ENCODE measurements at regions of chr10 and their contacts with region 1.

Region 1: DNA sequence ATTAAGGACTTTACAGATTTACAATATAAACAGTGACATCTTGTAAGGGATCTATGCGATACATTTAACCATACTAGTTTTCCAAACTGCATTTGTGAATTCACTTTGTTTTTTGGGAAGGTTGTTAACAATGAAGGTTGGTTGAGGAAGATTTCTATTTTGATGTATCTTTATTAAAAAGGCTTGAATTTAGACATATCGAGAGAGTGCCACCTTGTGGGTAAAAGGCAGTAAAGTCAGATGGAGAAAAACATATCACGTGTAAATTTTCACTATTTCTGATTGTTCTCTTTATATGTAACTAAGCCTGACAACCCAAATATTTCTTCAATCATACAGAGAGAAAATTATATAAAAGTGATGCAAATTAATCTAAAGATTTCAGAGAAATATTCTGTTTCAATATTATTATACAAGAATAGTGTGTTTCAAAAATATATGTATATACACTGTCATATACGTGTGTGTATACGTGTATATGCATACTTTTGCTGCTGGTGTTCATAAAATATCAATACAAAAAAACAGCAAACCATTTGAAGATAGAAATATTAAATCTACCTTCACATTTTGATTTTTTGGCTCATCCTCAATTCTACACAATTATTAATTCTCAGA is 988.6 kb downstream of the SORCS1 start:
- DNase-seq: peak; percentile 50
- H3K4me3 Mint-ChIP-seq: no peak overlapping the region
- H3K27ac Mint-ChIP-seq: no peak overlapping the region
- H3K4me1 Mint-ChIP-seq: no peaks in the 10 kb centered on the region
- H3K27me3 Mint-ChIP-seq: no peaks in the 10 kb centered on the region
- CTCF ChIP-seq: peak; percentile 60

Region 2: GRCh38 chr10:105063796-105064195 is 1112.1 kb before region 1 on chr10:
- CTCF ChIA-PET with region 1: interaction called, 3 read pairs
- POLR2A ChIA-PET with region 1: no interaction called
- intact Hi-C with region 1: loop called (anchors 5 kb)
- DNase-seq: peak; percentile 56
- H3K4me3 Mint-ChIP-seq: no peak overlapping the region
- H3K27ac Mint-ChIP-seq: no peak overlapping the region
- H3K4me1 Mint-ChIP-seq: no peaks in the 10 kb centered on the region
- H3K27me3 Mint-ChIP-seq: no peaks in the 10 kb centered on the region
- CTCF ChIP-seq: peak; percentile 76

Region 3: GRCh38 chr10:105797234-105797890 is 378.5 kb before region 1 on chr10:
- CTCF ChIA-PET with region 1: interaction called, 6 read pairs
- POLR2A ChIA-PET with region 1: no interaction called
- intact Hi-C with region 1: loop called (anchors 1 kb)
- DNase-seq: peak; percentile 78
- H3K4me3 Mint-ChIP-seq: no peak overlapping the region
- H3K27ac Mint-ChIP-seq: no peak overlapping the region
- H3K4me1 Mint-ChIP-seq: peaks cover 14% of the 10 kb centered on the region
- H3K27me3 Mint-ChIP-seq: no peaks in the 10 kb centered on the region
- CTCF ChIP-seq: peak; percentile 59

Region 4: GRCh38 chr10:106682175-106682574 is 506.3 kb after region 1 on chr10:
- CTCF ChIA-PET with region 1: no interaction called
- POLR2A ChIA-PET with region 1: no interaction called
- intact Hi-C with region 1: loop called (anchors 5 kb)
- DNase-seq: peak; percentile 31
- H3K4me3 Mint-ChIP-seq: no peak overlapping the region
- H3K27ac Mint-ChIP-seq: no peak overlapping the region
- H3K4me1 Mint-ChIP-seq: peaks cover 8% of the 10 kb centered on the region
- H3K27me3 Mint-ChIP-seq: no peaks in the 10 kb centered on the region
- CTCF ChIP-seq: peak; percentile 32

Measured in MCF 10A (cell line).